PC-3 (cell line): ENCODE measurements at regions of chr7 and their contacts with region 1.

Region 1: GRCh38 chr7:92245487-92246362 is at the starts of genes ANKIB1 and KRIT1:
- DNase-seq: peak; percentile 83
- ATAC-seq: peak; percentile 78
- H3K4me3 ChIP-seq: peak within 1 kb of the TSS; percentile 92
- H3K27ac ChIP-seq: peak within 1 kb of the TSS; percentile 84
- H3K4me1 ChIP-seq: peaks cover 21% of the 10 kb centered on the region
- H3K27me3 ChIP-seq: no peaks in the 10 kb centered on the region
- CTCF ChIP-seq: no peak
- total RNA-seq, gene ANKIB1: 25.1 and 32.1 TPM in 2 replicates
- total RNA-seq, gene KRIT1: 23.7 and 46.4 TPM in 2 replicates

Region 2: DNA sequence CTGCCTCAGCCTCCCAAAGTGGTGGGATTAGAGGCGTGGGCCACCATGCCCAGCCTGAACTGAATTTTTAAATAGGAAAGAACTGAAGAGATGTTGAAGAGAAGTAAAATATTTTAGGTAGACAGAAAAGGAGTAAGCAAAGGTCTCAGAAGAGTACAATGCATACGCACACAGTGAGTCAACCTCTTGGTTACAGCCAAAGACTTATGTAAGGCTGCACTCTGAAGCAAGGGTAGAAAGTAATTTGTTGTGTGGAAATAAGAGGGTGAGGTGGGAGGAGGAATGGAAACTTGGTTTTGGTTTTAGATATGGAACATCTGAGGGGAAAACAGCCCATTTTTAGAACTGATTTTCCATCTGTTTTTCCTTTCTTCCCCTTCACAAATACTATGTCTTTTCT is 17.6 kb before region 1 on chr7:
- CTCF ChIA-PET with region 1: no interaction called
- POLR2A ChIA-PET with region 1: no interaction called
- intact Hi-C with region 1: no loop called
- DNase-seq: no peak
- ATAC-seq: no peak; the same call in 1 of the 2 replicates
- H3K4me3 ChIP-seq: no peak overlapping the region
- H3K27ac ChIP-seq: no peak overlapping the region
- H3K4me1 ChIP-seq: no peaks in the 10 kb centered on the region
- H3K27me3 ChIP-seq: no peaks in the 10 kb centered on the region
- CTCF ChIP-seq: no peak

Region 3: DNA sequence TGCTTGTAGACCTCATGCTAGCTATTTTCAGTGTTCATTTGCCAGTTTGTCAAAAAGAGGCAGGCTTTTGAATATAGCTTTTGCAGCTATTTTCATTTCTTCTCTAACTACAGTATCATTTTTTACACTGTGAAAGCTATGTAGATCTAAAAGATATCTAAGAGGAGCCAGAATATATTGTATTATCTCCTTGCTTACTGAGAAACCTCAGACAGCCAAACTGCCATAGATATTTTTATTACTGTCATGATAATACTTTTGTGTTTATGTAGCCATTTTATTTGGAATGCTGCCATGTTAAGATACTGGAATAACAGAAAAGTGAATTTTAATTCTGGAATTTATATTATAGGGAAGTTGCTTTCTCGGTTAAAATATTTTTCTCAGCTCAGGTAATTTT is 37.2 kb after region 1 on chr7:
- CTCF ChIA-PET with region 1: no interaction called
- POLR2A ChIA-PET with region 1: interaction called, 11 read pairs
- intact Hi-C with region 1: no loop called
- DNase-seq: no peak
- ATAC-seq: no peak
- H3K4me3 ChIP-seq: no peak overlapping the region
- H3K27ac ChIP-seq: no peak overlapping the region
- H3K4me1 ChIP-seq: no peaks in the 10 kb centered on the region
- H3K27me3 ChIP-seq: no peaks in the 10 kb centered on the region
- CTCF ChIP-seq: no peak

Region 4: GRCh38 chr7:92461027-92462003 is 215.6 kb after region 1 on chr7:
- CTCF ChIA-PET with region 1: no interaction called
- POLR2A ChIA-PET with region 1: no interaction called
- intact Hi-C with region 1: no loop called
- DNase-seq: peak; percentile 61
- ATAC-seq: peak; percentile 71
- H3K4me3 ChIP-seq: no peak overlapping the region
- H3K27ac ChIP-seq: no peak overlapping the region
- H3K4me1 ChIP-seq: peaks cover 23% of the 10 kb centered on the region
- H3K27me3 ChIP-seq: no peaks in the 10 kb centered on the region
- CTCF ChIP-seq: peak; percentile 83